Activated CD4-positive, alpha-beta T cell treated with anti-CD3 and anti-CD28 coated beads, Interleukin-2, amount 10 ng/mL, durations not matched to agents 24 days and 14 days (primary cell): ENCODE measurements at regions of chrX and their contacts with region 1.

Region 1: GRCh38 chrX:139204898-139205667 is 325.5 kb upstream of the F9 start:
- DNase-seq: no peak
- H3K4me3 Mint-ChIP-seq: peak overlapping the region; percentile 54
- H3K27ac Mint-ChIP-seq: no peak overlapping the region
- H3K4me1 Mint-ChIP-seq: no peaks in the 10 kb centered on the region
- H3K27me3 Mint-ChIP-seq: peaks cover 24% of the 10 kb centered on the region

Region 2: GRCh38 chrX:137565921-137566745 is 1639.0 kb before region 1 on chrX and contains the start of gene ZIC3:
- intact Hi-C with region 1: loop called (anchors 5 kb)
- DNase-seq: no peak
- H3K4me3 Mint-ChIP-seq: peak within 1 kb of the TSS; percentile 36
- H3K27ac Mint-ChIP-seq: peak within 1 kb of the TSS; percentile 84
- H3K4me1 Mint-ChIP-seq: peaks cover 5% of the 10 kb centered on the region
- H3K27me3 Mint-ChIP-seq: peaks cover 65% of the 10 kb centered on the region
- total RNA-seq, gene ZIC3: not detected in 2 replicates

Region 3: GRCh38 chrX:139332441-139332840 is 127.4 kb after region 1 on chrX:
- intact Hi-C with region 1: no loop called
- DNase-seq: no peak
- H3K4me3 Mint-ChIP-seq: no peak overlapping the region
- H3K27ac Mint-ChIP-seq: no peak overlapping the region
- H3K4me1 Mint-ChIP-seq: no peaks in the 10 kb centered on the region
- H3K27me3 Mint-ChIP-seq: no peaks in the 10 kb centered on the region

Region 4: GRCh38 chrX:140503714-140504351 is 1298.8 kb after region 1 on chrX:
- intact Hi-C with region 1: loop called (anchors 10 kb)
- DNase-seq: no peak
- H3K4me3 Mint-ChIP-seq: no peak overlapping the region
- H3K27ac Mint-ChIP-seq: no peak overlapping the region
- H3K4me1 Mint-ChIP-seq: no peaks in the 10 kb centered on the region
- H3K27me3 Mint-ChIP-seq: peaks cover 48% of the 10 kb centered on the region